ENCODE measurements at regions of chr9 and their contacts with region 1.

Region 1: DNA sequence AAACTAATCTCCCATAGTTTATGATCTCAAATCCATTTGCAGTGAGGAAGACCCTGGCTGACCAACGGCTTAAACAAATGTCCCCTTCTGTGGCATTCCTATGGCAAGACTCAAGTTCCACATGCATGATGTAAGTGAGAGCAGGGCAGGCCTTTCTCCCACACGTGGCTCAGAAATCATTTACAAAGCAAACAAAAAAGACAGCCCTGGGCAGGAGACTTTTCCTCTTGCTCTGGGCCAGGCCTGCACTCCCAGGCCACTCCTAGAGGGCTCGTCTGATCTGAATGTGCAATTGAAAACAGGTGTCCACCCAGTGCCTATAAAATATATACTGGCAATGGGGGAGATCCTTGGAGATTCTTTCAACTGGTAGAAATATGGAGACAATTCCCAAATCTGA is 123.0 kb downstream of the DMRT2 start:
- DNase-seq: no peak
- H3K4me3 ChIP-seq: no peak overlapping the region
- H3K27ac ChIP-seq: no peak overlapping the region
- H3K4me1 ChIP-seq: no peaks in the 10 kb centered on the region
- H3K27me3 ChIP-seq: no peaks in the 10 kb centered on the region
- CTCF ChIP-seq: no peak
- POLR2A ChIP-seq: no peak

Region 2: GRCh38 chr9:1231998-1232919 is 59.1 kb after region 1 on chr9:
- intact Hi-C with region 1: loop called in 1 of 2 experiments (anchors 10 kb)
- DNase-seq: peak in 6 of 7 donors; percentile 22 to 70 (median 38)
- H3K4me3 ChIP-seq: no peak overlapping the region
- H3K27ac ChIP-seq: peak overlapping the region in 1 of 5 donors; percentile 47
- H3K4me1 ChIP-seq: no peaks in the 10 kb centered on the region
- H3K27me3 ChIP-seq: no peaks in the 10 kb centered on the region
- CTCF ChIP-seq: no peak
- POLR2A ChIP-seq: no peak

Measured in adrenal gland (tissue), 19 donors.